B cell (primary cell): ENCODE measurements at regions of chr13 and their contacts with region 1.

Region 1: GRCh38 chr13:31236211-31236786 is 36.5 kb downstream of the B3GLCT start:
- DNase-seq: peak; percentile 48
- ATAC-seq: no peak
- H3K4me3 ChIP-seq: no peak overlapping the region
- H3K4me3 Mint-ChIP-seq: no peak overlapping the region
- H3K27ac ChIP-seq: no peak overlapping the region
- H3K27ac Mint-ChIP-seq: no peak overlapping the region
- H3K4me1 ChIP-seq: no peaks in the 10 kb centered on the region
- H3K4me1 Mint-ChIP-seq: peaks cover 1% of the 10 kb centered on the region
- H3K27me3 ChIP-seq: no peaks in the 10 kb centered on the region
- H3K27me3 Mint-ChIP-seq: no peaks in the 10 kb centered on the region
- CTCF ChIP-seq: peak; percentile 75

Region 2: GRCh38 chr13:31409678-31410356 is 173.5 kb after region 1 on chr13:
- CTCF ChIA-PET with region 1: interaction called, 38 read pairs
- POLR2A ChIA-PET with region 1: no interaction called
- intact Hi-C with region 1: loop called (anchors 1 kb)
- DNase-seq: peak; percentile 15
- ATAC-seq: no peak
- H3K4me3 ChIP-seq: no peak overlapping the region
- H3K4me3 Mint-ChIP-seq: no peak overlapping the region
- H3K27ac ChIP-seq: no peak overlapping the region
- H3K27ac Mint-ChIP-seq: no peak overlapping the region
- H3K4me1 ChIP-seq: no peaks in the 10 kb centered on the region
- H3K4me1 Mint-ChIP-seq: peaks cover 4% of the 10 kb centered on the region
- H3K27me3 ChIP-seq: no peaks in the 10 kb centered on the region
- H3K27me3 Mint-ChIP-seq: no peaks in the 10 kb centered on the region
- CTCF ChIP-seq: no peak